Colonic mucosa (tissue), 4 donors: ENCODE measurements at regions of chr20 and their contacts with region 1.

Region 1: DNA sequence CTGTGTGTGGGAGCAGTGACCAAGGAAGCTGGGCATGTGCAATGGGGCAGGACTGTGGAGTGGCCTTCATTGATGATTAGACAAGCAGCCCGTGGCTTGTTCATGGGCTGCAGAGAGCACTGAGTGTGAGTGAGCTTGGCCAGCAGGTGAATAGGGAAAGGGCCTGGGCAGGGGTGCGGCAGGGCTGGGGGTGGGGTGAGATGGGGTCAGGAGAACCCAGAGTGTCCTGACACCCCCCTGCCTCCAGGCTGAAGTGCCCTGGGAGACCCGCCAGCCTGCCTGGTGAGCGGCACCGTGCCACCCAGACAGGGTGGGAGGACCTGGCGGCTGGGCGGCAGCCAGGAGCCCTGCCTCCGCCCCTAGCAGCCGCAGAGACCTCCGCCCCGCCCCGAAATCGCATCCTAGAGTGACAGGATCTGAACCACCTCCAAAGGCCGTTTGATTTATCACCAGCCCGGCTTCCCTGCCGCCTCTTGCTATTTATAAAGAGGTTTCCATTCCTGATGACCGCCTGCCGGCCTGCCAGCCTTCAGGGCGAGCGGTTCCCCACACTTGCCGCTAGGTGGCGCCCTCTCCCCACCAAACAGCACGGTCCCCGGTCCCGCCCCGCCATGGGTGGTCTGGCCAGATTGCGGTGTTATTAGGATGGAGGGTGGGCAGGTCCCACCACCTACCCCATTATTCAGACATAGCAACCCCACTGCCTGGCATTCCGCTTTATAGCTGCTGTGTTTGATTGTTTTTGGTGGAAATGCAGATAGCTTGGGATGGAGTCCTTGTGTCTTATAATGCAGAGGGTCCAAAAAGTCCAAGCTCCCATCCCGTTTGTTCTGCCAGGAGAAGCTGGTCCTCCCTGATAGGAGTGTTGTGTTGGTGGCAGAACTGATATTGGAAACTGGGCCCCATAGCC is 3.5 kb downstream of the MYLK2 start:
- DNase-seq: peak; percentile 66
- H3K4me3 ChIP-seq: no peak overlapping the region
- H3K27ac ChIP-seq: no peak overlapping the region
- H3K4me1 ChIP-seq: no peaks in the 10 kb centered on the region
- H3K27me3 ChIP-seq: no peaks in the 10 kb centered on the region
- CTCF ChIP-seq: peak; percentile 98

Region 2: DNA sequence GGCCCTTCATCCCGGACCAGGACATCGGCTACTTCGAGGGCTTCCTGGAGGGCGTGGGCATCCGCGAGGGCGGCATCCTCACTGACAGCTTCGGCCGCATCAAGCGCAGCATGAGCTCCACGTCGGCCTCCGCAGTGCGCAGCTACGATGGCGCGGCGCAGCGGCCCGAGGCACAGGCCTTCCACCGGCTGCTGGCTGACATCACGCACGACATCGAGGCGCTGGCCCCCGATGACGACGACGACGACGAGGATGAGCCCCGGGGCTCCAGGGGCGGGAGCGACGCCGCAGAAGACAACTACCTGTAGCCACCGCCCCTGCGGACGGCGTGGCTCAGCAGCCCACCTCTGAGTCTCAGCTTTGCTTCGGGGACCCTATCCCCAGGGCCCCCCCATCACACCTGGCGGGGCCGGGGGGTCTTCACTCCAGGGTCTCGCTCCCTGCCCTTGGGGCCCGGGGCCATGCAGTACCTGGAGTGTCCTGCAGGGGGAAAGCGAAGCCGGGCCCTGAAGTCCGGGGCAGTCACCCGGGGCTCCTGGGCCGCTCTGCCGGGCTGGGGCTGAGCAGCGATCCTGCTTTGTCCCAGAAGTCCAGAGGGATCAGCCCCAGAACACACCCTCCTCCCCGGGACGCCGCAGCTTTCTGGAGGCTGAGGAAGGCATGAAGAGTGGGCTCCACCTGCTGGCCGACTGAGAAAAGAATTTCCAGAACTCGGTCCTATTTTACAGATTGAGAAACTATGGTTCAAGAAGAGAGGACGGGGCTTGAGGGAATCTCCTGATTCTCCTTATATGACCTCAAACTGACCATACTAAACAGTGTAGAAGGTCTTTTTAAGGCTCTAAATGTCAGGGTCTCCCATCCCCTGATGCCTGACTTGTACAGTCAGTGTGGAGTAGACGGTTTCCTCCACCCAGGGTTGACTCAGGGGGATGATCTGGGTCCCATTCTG is 208.6 kb after region 1 on chr20:
- intact Hi-C with region 1: loop called (anchors 5 kb)
- DNase-seq: peak; percentile 75
- H3K4me3 ChIP-seq: peak overlapping the region; percentile 15
- H3K27ac ChIP-seq: no peak overlapping the region
- H3K4me1 ChIP-seq: no peaks in the 10 kb centered on the region
- H3K27me3 ChIP-seq: peaks cover 4% of the 10 kb centered on the region
- CTCF ChIP-seq: peak; percentile 93

Region 3: GRCh38 chr20:32091888-32092346 is 269.2 kb after region 1 on chr20:
- intact Hi-C with region 1: loop called (anchors 2 kb)
- DNase-seq: peak; percentile 75
- H3K4me3 ChIP-seq: no peak overlapping the region
- H3K27ac ChIP-seq: no peak overlapping the region
- H3K4me1 ChIP-seq: no peaks in the 10 kb centered on the region
- H3K27me3 ChIP-seq: no peaks in the 10 kb centered on the region
- CTCF ChIP-seq: peak; percentile 93